ENCODE measurements at regions of chr3 and their contacts with region 1.

Region 1: GRCh38 chr3:150721285-150722130 is 17.8 kb upstream of the ERICH6 start:
- DNase-seq: peak in 3 of 35 experiments; percentile 23 to 82 (median 27)
- ATAC-seq: peak; percentile 73 to 82 (median 77)
- H3K4me3 ChIP-seq: no peak overlapping the region
- H3K4me3 Mint-ChIP-seq: no peak overlapping the region
- H3K27ac ChIP-seq: no peak overlapping the region
- H3K27ac Mint-ChIP-seq: no peak overlapping the region
- H3K4me1 ChIP-seq: peaks cover 0 to 5% of the 10 kb centered on the region in 2 experiments
- H3K4me1 Mint-ChIP-seq: peaks cover 12 to 18% (median 13%) of the 10 kb centered on the region in 3 donors
- H3K27me3 ChIP-seq: no peaks in the 10 kb centered on the region
- H3K27me3 Mint-ChIP-seq: no peaks in the 10 kb centered on the region

Region 2: DNA sequence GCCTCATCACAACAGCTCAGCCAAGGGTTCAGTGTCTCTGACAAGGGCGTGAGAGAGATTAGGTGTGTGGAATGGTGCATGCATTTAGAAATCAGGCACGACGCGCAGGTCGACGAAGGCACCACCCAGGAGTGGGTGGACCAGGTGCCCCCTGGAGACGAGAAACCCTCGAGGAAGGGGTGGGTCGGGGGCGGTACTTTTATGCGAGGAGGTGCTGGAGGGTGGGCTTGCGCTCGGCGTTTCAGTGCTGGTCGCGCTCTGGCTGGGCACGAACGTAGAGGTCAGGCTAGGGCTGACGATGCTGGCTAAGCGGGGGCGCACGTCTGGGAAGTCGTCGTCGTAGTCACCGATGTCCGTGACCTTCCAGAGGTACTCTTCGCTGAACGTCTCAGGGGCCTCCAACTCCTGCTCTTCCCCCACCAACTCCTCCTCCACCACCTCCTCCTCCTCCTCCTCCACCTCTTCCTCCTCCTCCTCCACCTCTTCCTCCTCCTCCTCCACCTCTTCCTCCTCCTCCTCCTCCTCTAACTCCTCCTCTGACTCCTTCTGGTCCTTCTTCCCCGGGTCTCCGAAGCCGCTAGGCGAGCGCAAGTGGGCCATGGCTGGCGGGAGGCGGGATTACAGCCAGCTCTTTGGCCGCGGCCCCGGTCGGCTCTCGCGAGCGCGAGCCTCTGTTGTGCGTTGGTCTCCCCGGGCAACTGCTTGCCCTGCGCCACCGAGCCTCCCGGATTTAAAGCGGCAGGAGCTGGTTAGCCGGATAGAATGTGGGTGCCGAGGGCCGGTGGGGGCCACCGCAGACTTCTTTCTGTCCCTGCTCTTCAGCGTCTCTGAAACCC is 18.0 kb before region 1 on chr3 and contains the start of gene ERICH6:
- CTCF ChIA-PET with region 1: interaction called, 4 to 8 read pairs
- POLR2A ChIA-PET with region 1: interaction called in 1 of 2 experiments, 11 read pairs
- DNase-seq: peak; percentile 44 to 84 (median 69)
- ATAC-seq: peak; percentile 84 to 89 (median 84)
- H3K4me3 ChIP-seq: peak within 1 kb of the TSS; percentile 87 to 89
- H3K4me3 Mint-ChIP-seq: peak within 1 kb of the TSS; percentile 93 to 98 (median 96)
- H3K27ac ChIP-seq: peak within 1 kb of the TSS; percentile 94
- H3K27ac Mint-ChIP-seq: peak within 1 kb of the TSS; percentile 96 to 97
- H3K4me1 ChIP-seq: peaks cover 9 to 23% of the 10 kb centered on the region in 2 experiments
- H3K4me1 Mint-ChIP-seq: peaks cover 17 to 28% (median 21%) of the 10 kb centered on the region in 3 donors
- H3K27me3 ChIP-seq: no peaks in the 10 kb centered on the region
- H3K27me3 Mint-ChIP-seq: no peaks in the 10 kb centered on the region
- total RNA-seq, gene ERICH6: 0.26 to 0.39 (median 0.28) TPM in 3 of 5 donors, not detected in the others

Region 3: GRCh38 chr3:150870396-150870795 is 148.9 kb after region 1 on chr3:
- CTCF ChIA-PET with region 1: interaction called, 9 to 14 read pairs
- POLR2A ChIA-PET with region 1: no interaction called
- DNase-seq: no peak
- ATAC-seq: no peak
- H3K4me3 ChIP-seq: no peak overlapping the region
- H3K4me3 Mint-ChIP-seq: no peak overlapping the region
- H3K27ac ChIP-seq: no peak overlapping the region
- H3K27ac Mint-ChIP-seq: no peak overlapping the region
- H3K4me1 ChIP-seq: no peaks in the 10 kb centered on the region
- H3K4me1 Mint-ChIP-seq: peaks cover 0 to 3% (median under 1%) of the 10 kb centered on the region in 3 donors
- H3K27me3 ChIP-seq: no peaks in the 10 kb centered on the region
- H3K27me3 Mint-ChIP-seq: peaks cover 12% of the 10 kb centered on the region in 2 donors

Region 4: DNA sequence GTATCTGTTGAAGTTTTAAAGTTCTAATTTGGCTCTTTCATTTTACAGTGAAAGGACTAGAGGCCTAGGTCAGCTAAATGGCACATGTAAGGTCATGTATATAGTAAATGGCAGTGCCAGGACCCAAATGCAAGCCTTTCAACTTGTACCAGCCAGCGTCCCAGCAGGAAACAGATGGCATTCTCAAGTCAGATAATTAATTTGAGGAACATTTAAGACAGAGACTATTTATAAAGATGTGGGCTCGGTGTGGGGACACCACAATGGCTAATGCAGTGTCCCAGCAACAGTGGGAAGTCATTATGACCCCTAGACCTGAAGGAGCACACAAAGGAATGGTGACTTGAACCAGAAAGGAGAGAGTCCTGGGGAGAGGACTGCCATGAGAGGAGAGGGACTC is 177.6 kb after region 1 on chr3:
- CTCF ChIA-PET with region 1: no interaction called
- POLR2A ChIA-PET with region 1: no interaction called
- DNase-seq: no peak
- ATAC-seq: no peak
- H3K4me3 ChIP-seq: no peak overlapping the region
- H3K4me3 Mint-ChIP-seq: no peak overlapping the region
- H3K27ac ChIP-seq: no peak overlapping the region
- H3K27ac Mint-ChIP-seq: no peak overlapping the region
- H3K4me1 ChIP-seq: no peaks in the 10 kb centered on the region
- H3K4me1 Mint-ChIP-seq: no peaks in the 10 kb centered on the region
- H3K27me3 ChIP-seq: no peaks in the 10 kb centered on the region
- H3K27me3 Mint-ChIP-seq: peaks cover 14 to 18% of the 10 kb centered on the region in 2 donors